ENCODE measurements at regions of chr5 and their contacts with region 1.

Region 1: DNA sequence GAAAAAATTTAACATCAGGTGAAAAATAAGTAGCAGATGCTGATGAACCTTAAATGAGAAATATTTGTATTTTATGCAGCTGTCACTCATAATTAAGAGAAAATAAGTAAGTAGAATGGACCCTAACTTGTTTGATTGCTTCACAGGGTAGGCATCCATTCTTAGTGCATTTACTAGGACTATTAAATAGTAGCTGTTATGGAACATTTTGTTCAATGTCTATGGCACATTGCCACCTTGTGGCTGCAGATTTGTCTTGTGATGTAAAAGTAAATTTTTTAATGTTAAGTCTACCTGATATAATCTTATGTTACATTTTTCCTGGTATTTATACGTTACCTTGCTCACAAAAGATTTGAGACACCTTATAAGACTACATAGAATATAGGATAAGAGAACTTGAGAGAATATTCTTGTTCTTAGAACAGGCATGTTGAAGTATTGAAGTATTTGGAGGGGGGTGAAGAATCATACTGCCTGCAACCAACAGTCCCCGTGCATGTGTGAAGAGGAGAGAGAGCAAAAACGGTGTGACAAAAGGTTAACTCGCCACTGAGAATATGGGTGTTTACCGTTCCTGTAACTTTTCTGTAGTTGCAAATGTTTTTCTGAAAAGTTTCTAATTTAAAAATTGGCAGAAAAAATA is 161.1 kb downstream of the MAST4 start:
- DNase-seq: peak; percentile 44

Region 2: DNA sequence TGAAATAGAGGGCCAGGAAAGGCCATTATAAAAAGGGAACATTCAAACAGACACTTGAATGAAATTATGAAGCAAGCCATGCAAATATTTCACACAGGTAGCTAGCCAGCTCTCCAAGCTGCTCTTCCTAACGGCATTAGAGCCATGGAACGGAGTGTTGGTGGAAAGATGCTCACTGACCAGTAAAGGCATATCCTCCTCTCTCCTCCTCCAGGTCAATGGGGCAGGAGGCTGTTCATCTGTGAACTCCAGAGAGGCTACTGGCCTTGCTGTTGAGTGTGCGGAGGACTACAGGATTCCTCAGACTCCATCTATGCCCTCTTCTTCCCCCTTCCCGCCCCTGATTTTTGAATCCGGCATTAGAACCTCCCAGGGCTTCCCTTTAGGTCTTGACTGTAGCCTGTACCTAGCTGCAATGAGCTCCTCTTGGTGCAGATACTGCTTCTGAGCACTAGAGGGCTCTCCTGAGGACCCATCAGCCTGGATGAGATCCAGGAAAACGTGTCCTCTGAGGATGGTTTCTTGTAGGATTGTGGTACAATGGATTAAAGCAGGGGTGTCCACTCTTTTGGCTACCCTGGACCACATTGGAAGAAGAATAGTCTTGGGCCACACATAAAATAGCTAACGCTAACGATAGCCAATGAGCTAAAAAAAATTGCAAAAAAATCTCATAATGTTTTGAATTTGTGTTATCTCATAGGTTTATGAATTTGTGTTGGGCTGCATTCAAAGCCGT is 451.0 kb before region 1 on chr5:
- in situ Hi-C with region 1: loop called (anchors 25 kb)
- DNase-seq: peak; percentile 60

Region 3: DNA sequence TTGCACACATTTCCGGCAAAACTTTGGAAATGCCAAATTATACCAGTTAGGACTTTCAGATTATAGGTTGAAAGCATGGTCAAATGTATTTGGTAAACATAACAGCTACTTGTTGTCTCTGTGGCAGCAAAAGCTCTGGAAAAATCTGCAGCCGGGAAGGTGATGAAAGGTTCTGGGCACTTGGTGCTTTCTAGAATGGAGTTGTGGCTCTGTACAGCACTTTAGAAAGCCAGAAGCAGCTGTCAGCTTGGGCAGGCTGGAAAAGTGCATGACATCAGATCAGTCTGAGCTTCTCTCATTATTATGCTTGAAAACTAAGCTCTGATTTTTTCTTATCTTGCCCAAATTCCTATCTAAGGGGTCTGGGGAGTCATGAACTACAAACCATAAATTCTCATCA is 279.7 kb before region 1 on chr5:
- in situ Hi-C with region 1: no loop called
- DNase-seq: no peak

Measured in ACHN (cell line).